AG04449 (cell line): ENCODE measurements at regions of chr9 and their contacts with region 1.

Region 1: DNA sequence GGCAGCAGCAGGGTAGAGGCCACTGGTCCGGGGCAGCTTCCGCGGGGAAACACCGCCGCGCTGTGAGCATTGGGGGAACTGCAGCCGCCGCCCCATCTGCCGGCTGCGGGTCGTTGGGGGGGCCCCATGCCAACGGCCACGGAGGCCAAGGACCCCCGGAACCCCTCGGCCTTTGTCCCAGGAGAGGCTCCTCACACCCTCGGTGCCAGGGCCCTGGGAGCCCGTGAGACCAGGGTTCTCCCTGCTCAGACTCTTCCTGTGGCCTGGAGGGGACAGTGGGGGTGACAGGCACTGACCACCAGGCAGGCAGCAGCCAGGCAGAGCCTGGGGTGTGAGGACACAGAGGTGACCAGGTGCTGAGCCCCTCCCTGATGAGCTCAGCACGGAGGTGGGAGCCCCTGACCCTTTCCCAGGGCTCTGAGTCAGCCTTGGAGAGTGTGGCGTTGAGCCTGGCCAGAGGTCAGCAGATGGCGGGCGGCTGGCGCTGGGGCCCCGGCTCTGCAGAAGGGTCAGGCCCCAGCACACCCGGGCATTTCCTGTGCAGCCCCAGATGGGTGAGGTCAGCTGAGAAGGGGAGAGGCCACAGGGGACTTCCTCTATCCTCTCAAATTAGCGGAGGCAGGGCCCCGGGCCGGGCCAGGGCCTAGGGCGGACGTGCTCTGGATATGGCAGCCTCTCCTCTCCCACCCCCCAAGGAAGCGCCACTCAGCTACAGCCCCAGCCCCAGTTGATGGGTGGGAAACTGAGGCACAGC is 17.9 kb upstream of the EGFL7 start:
- DNase-seq: no peak
- H3K4me3 ChIP-seq: no peak overlapping the region
- CTCF ChIP-seq: peak; percentile 93

Region 2: DNA sequence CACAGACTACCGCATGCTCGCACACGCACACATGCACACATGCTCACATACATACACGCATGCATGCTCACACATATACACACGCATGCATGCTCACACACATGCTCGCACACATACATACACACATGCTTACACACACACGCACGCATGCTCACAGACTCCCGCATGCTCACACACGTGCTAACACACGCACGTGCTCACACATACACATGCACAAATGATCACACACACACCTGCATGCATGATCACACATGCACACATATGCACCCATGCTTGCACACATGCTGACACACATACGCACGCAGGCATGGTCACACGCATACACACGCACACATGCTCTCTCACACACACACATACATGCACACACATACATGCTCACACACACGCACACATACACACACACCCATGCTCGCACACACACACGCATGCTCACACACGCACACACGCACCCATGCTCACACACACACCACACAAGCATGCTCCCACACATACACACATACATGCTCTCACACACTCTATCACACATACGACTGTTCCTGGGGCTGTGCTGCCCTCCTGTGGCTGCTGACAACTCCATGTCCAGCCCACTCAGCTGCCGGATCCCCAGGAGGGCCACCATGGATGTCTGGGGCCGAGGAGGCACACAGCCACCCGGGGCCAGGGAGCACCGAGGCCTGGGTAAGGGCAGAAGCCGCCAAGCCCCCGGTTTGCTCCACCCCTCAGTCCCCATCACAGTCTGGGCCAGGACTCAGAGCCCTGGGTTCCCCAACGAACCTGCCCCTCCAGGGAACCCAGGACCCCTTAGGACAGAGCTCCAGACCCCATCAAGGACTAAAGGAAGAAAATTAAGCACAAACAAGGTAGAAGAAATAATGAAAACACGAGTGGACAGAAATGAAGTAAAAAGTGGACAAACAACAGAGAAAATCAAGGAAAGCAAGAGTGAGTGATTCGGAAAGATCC is 13.5 kb before region 1 on chr9:
- CTCF ChIA-PET with region 1: interaction called, 19 read pairs
- POLR2A ChIA-PET with region 1: no interaction called
- DNase-seq: no peak
- H3K4me3 ChIP-seq: no peak overlapping the region
- CTCF ChIP-seq: peak; percentile 93

Region 3: GRCh38 chr9:136655536-136656182 is 10.9 kb after region 1 on chr9:
- CTCF ChIA-PET with region 1: interaction called, 11 read pairs
- POLR2A ChIA-PET with region 1: no interaction called
- DNase-seq: no peak
- H3K4me3 ChIP-seq: no peak overlapping the region
- CTCF ChIP-seq: no peak